CD4-positive, alpha-beta memory T cell (primary cell): ENCODE measurements at regions of chr3 and their contacts with region 1.

Region 1: DNA sequence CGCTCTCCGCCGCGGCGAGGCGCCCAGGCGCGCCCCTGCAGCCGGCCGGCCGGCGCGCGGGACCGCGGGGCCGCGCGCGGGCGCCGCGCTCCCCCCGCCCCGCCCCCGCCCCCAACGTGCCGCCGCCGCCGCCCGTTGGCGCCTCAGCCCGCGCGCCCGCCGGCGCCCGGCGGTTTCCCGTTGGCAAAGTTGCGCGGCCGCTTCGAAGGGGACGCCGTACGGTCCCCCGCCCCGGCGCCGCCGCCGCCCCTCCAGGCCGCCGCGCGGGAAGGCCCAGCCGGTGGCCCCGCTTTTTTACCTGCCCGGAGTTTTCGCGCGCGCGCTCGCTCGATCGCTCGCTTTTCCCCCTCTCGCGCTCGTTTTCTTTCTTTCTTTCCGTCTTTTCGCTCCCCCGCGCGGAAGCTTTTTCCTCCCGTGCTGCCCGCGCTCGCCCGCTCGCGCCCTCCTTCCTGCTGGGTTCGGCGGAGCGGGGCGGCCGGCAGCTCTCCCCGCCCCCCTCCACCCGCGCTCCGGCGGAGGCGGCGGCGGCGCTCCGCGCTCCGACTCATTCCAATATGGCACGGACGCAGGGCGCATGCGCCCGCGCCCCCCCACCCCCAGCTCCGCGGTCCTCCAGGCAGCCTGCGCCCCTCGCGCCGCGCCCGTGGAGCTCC is at the start of gene SFMBT1:
- DNase-seq: peak; percentile 71 to 80 (median 73)
- H3K4me3 ChIP-seq: peak within 1 kb of the TSS; percentile 42 to 94
- H3K4me3 Mint-ChIP-seq: peak within 1 kb of the TSS; percentile 97 to 99 (median 98)
- H3K27ac ChIP-seq: peak within 1 kb of the TSS; percentile 75
- H3K27ac Mint-ChIP-seq: peak within 1 kb of the TSS; percentile 98 to 100 (median 99)
- H3K4me1 ChIP-seq: peaks cover 46% of the 10 kb centered on the region
- H3K4me1 Mint-ChIP-seq: peaks cover 27 to 53% (median 38%) of the 10 kb centered on the region in 4 donors
- H3K27me3 ChIP-seq: no peaks in the 10 kb centered on the region
- H3K27me3 Mint-ChIP-seq: peaks cover 0 to 1% of the 10 kb centered on the region in 2 donors
- total RNA-seq, gene SFMBT1: 49.3 to 50.8 TPM

Region 2: DNA sequence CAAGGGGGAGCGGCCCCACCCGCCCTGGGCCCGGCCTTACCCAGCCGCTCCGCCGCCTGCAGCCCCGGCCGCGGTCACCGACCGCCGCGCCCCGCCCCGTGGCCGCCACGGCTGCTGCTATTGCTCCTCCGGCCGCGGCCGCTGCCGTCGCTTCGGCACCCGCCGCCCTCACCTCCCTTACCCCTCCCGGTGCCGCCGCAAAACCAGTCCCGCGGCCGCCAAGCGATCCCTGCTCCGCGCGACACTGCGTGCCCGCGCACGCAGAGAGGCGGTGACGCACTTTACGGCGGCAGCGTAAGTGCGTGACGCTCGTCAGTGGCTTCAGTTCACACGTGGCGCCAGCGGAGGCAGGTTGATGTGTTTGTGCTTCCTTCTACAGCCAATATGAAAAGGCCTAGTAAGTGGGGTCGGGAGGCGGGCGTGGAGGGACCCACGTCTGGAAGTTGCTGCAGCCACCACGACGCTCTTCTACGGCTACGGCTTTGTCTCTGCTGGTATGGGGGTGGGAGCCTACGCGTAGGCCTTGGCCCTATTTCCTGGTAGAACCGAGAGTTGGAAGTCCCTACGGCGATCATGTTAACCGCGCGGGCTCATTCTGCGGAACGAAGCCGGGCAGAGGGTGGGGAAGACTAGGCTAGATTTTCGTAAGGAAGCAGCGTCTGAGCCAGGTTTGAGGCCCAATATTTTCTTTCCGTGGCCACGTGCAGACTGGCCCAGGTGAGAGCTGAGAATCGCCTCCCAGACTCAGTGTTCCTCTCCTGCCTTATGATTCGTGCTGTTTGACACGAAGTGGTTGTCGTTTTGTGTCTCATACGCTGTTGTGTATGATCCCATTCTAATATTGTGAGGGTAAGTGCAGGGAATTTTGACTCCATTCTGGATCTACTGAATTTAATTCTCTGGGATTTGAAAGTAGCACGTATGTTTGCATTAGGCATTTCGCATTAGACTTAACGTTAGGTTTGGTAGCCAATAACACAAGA is 359.6 kb before region 1 on chr3 and contains the starts of genes GNL3 and PBRM1:
- CTCF ChIA-PET with region 1: no interaction called
- POLR2A ChIA-PET with region 1: no interaction called
- intact Hi-C with region 1: loop called (anchors 2 kb)
- DNase-seq: peak; percentile 91 to 95 (median 93)
- H3K4me3 ChIP-seq: peak within 1 kb of the TSS; percentile 79 to 96
- H3K4me3 Mint-ChIP-seq: peak within 1 kb of the TSS; percentile 95 to 99 (median 98)
- H3K27ac ChIP-seq: peak within 1 kb of the TSS; percentile 89
- H3K27ac Mint-ChIP-seq: peak within 1 kb of the TSS; percentile 95 to 99 (median 99)
- H3K4me1 ChIP-seq: peaks cover 50% of the 10 kb centered on the region
- H3K4me1 Mint-ChIP-seq: peaks cover 29 to 62% (median 46%) of the 10 kb centered on the region in 4 donors
- H3K27me3 ChIP-seq: no peaks in the 10 kb centered on the region
- H3K27me3 Mint-ChIP-seq: no peaks in the 10 kb centered on the region
- total RNA-seq, gene GNL3: 80.3 to 88.4 TPM
- total RNA-seq, gene PBRM1: 74.2 to 78.5 TPM

Region 3: DNA sequence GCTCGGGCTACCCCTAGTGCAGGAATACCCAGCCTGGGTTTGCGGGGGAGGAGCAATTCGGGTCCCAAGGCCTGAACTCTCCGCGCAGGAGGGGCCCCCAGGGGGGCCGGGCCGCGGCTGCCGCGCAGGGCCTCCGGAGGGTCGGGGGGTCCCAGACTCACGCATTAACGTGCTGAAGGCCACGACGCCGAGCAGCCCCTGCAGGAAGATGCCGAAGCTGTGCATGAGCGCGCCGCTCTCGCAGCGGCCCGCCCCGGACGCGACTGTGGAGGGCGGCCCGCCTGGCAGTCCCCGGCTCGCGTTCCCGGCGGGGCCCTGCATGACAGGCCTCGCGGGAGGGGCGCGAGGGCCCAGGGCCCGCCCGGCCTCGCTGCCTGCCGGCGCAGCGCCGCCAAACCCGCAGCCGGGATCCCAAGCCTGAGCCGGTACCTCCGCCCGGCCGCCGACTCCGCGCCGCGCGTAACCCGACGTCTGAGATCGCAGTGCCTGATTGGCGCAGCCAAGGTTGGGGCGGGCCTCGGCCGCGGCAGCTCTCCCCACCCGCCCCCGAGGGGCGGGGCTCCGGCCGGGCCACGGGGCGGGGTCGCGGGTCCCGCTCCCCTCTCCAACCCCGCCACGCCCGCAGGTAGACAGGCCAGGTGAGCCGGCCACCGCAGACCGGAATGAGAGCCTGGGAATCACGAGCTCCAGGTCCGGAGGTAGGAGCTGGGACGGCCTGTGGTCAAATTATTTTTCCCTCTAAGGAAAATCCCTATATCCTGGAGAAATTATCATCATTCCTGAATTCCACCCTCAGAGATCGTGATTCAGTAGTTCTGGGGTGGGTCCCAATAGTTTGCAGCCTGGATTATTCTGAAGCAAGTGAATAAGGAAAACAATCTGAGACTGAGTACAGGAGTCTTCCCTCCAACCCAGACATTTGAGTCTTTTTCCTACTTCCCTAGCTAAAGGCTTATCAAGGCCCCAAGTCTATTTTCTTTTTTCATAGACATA is 148.2 kb before region 1 on chr3 and contains the start of gene STIMATE:
- CTCF ChIA-PET with region 1: no interaction called
- POLR2A ChIA-PET with region 1: interaction called, 25 read pairs
- intact Hi-C with region 1: loop called (anchors 2 kb)
- DNase-seq: peak; percentile 86 to 90 (median 88)
- H3K4me3 ChIP-seq: peak within 1 kb of the TSS; percentile 78 to 94
- H3K4me3 Mint-ChIP-seq: peak within 1 kb of the TSS; percentile 88 to 97 (median 95)
- H3K27ac ChIP-seq: peak within 1 kb of the TSS; percentile 65
- H3K27ac Mint-ChIP-seq: peak within 1 kb of the TSS; percentile 86 to 97 (median 95)
- H3K4me1 ChIP-seq: peaks cover 47% of the 10 kb centered on the region
- H3K4me1 Mint-ChIP-seq: peaks cover 39 to 53% (median 47%) of the 10 kb centered on the region in 4 donors
- H3K27me3 ChIP-seq: no peaks in the 10 kb centered on the region
- H3K27me3 Mint-ChIP-seq: no peaks in the 10 kb centered on the region
- total RNA-seq, gene STIMATE: 54.9 to 58.6 TPM

Region 4: GRCh38 chr3:52934630-52935530 is 110.8 kb before region 1 on chr3:
- CTCF ChIA-PET with region 1: interaction called, 18 read pairs
- POLR2A ChIA-PET with region 1: interaction called, 26 read pairs
- intact Hi-C with region 1: loop called (anchors 1 kb)
- DNase-seq: peak; percentile 49 to 55 (median 49)
- H3K4me3 ChIP-seq: no peak overlapping the region
- H3K4me3 Mint-ChIP-seq: peak overlapping the region in 6 of 8 donors; percentile 3 to 52 (median 26)
- H3K27ac ChIP-seq: no peak overlapping the region
- H3K27ac Mint-ChIP-seq: peak overlapping the region; percentile 49 to 89 (median 84)
- H3K4me1 ChIP-seq: peaks cover 11% of the 10 kb centered on the region
- H3K4me1 Mint-ChIP-seq: peaks cover 10 to 17% (median 14%) of the 10 kb centered on the region in 4 donors
- H3K27me3 ChIP-seq: no peaks in the 10 kb centered on the region
- H3K27me3 Mint-ChIP-seq: no peaks in the 10 kb centered on the region

Region 5: DNA sequence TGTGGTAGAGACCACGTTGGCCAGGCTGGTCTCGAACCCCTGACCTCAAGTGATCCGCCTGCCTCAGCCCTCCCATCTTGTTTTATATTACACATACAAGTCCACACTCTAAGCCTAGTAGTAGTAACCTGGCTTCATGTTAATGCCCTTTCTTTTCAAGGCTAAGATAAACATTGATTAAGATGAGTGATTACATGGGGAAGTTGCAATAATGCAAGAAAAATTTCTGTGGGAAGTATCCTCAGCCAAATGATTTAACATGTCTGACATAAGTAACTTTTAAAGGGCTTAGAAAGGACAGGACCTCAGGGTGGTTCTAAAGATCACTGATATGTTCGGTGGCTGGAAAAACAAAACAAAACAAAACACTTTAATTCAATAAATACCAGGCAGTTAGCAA is 71.8 kb before region 1 on chr3:
- CTCF ChIA-PET with region 1: interaction called, 7 read pairs
- POLR2A ChIA-PET with region 1: interaction called, 118 read pairs
- intact Hi-C with region 1: no loop called
- DNase-seq: no peak
- H3K4me3 ChIP-seq: no peak overlapping the region
- H3K4me3 Mint-ChIP-seq: peak overlapping the region in 1 of 8 donors; percentile 4
- H3K27ac ChIP-seq: no peak overlapping the region
- H3K27ac Mint-ChIP-seq: peak overlapping the region in 2 of 7 donors; percentile 14 to 65
- H3K4me1 ChIP-seq: peaks cover 5% of the 10 kb centered on the region
- H3K4me1 Mint-ChIP-seq: peaks cover 22 to 59% (median 32%) of the 10 kb centered on the region in 4 donors
- H3K27me3 ChIP-seq: no peaks in the 10 kb centered on the region
- H3K27me3 Mint-ChIP-seq: no peaks in the 10 kb centered on the region

Region 6: GRCh38 chr3:52983336-52983807 is 62.3 kb before region 1 on chr3:
- CTCF ChIA-PET with region 1: interaction called, 13 read pairs
- POLR2A ChIA-PET with region 1: interaction called, 118 read pairs
- intact Hi-C with region 1: loop called (anchors 1 kb)
- DNase-seq: peak; percentile 85 to 87 (median 86)
- H3K4me3 ChIP-seq: no peak overlapping the region
- H3K4me3 Mint-ChIP-seq: peak overlapping the region; percentile 13 to 87 (median 77)
- H3K27ac ChIP-seq: peak overlapping the region; percentile 19
- H3K27ac Mint-ChIP-seq: peak overlapping the region; percentile 85 to 97 (median 94)
- H3K4me1 ChIP-seq: peaks cover 37% of the 10 kb centered on the region
- H3K4me1 Mint-ChIP-seq: peaks cover 34 to 64% (median 45%) of the 10 kb centered on the region in 4 donors
- H3K27me3 ChIP-seq: no peaks in the 10 kb centered on the region
- H3K27me3 Mint-ChIP-seq: no peaks in the 10 kb centered on the region

Region 7: DNA sequence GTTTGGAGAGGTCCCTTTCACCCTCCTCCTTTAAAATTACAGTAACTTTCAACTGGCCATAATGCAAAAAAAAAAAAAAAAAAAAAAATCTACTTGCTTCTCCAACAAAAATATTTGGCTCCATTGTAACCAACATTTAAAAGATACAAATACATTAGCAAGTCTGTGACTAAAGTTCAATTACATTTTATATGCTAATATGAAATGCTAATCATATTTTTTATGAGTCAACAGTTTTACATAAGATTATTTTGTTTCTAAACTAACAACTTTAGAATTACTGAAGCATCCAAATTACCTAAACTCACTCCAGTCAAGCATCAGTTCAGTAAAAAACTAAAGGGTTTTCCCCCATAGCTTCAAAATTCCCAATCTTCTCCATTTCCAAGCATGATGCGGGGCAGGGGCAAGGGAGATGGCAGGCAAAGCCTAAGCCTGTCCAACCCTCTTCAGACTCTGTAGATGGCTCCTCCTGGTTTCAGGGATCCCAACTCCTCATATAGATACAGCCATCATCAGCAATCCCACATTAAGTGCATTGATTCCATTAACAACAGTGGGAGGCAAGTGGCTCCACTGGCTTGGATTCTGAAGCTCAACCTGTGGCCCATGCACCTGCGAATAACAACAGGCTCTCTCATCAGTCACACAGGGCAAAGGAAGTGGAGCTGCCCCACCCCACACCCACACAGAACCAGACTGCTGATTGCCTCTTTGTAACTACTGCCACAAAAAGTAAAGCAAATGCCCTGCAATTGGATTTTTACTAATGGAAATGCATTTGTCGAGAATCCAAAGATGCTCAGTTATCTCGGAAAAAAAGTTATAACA is 14.8 kb before region 1 on chr3:
- CTCF ChIA-PET with region 1: interaction called, 12 read pairs
- POLR2A ChIA-PET with region 1: interaction called, 143 read pairs
- intact Hi-C with region 1: loop called (anchors 1 kb)
- DNase-seq: peak; percentile 35 to 70 (median 53)
- H3K4me3 ChIP-seq: no peak overlapping the region
- H3K4me3 Mint-ChIP-seq: peak overlapping the region; percentile 45 to 78 (median 74)
- H3K27ac ChIP-seq: peak overlapping the region; percentile 16
- H3K27ac Mint-ChIP-seq: peak overlapping the region; percentile 52 to 95 (median 90)
- H3K4me1 ChIP-seq: peaks cover 61% of the 10 kb centered on the region
- H3K4me1 Mint-ChIP-seq: peaks cover 34 to 78% (median 57%) of the 10 kb centered on the region in 4 donors
- H3K27me3 ChIP-seq: no peaks in the 10 kb centered on the region
- H3K27me3 Mint-ChIP-seq: no peaks in the 10 kb centered on the region

Region 8: GRCh38 chr3:53375019-53375418 is 329.4 kb after region 1 on chr3:
- CTCF ChIA-PET with region 1: no interaction called
- POLR2A ChIA-PET with region 1: no interaction called
- intact Hi-C with region 1: no loop called
- DNase-seq: peak in 3 of 5 donors; percentile 15 to 21 (median 15)
- H3K4me3 ChIP-seq: no peak overlapping the region
- H3K4me3 Mint-ChIP-seq: no peak overlapping the region
- H3K27ac ChIP-seq: no peak overlapping the region
- H3K27ac Mint-ChIP-seq: no peak overlapping the region
- H3K4me1 ChIP-seq: no peaks in the 10 kb centered on the region
- H3K4me1 Mint-ChIP-seq: no peaks in the 10 kb centered on the region
- H3K27me3 ChIP-seq: no peaks in the 10 kb centered on the region
- H3K27me3 Mint-ChIP-seq: peaks cover 22 to 31% of the 10 kb centered on the region in 2 donors